ENCODE measurements at regions of chrX and their contacts with region 1.

Region 1: DNA sequence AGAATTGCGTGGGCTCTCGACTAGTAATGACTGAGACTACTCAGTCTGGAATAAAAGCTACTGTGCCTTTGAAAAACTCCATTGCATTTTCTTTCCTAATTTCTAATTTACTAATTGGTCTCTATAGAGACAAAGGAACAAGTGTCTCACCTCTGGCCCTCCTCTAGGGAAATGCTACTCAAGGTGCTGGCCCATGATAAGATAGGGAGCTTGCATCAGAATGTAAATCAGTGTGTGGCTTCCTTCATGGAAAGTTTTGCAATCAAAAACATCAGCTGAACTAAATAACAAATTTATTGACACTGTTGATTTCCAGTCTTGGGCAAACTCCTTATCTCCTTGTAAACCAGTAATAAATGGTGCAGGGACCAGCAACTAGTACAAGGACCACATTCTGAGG is 81.8 kb downstream of the SRPX start:
- DNase-seq: no peak
- H3K4me3 Mint-ChIP-seq: no peak overlapping the region
- H3K27ac Mint-ChIP-seq: no peak overlapping the region
- H3K4me1 Mint-ChIP-seq: no peaks in the 10 kb centered on the region
- H3K27me3 Mint-ChIP-seq: no peaks in the 10 kb centered on the region

Region 2: DNA sequence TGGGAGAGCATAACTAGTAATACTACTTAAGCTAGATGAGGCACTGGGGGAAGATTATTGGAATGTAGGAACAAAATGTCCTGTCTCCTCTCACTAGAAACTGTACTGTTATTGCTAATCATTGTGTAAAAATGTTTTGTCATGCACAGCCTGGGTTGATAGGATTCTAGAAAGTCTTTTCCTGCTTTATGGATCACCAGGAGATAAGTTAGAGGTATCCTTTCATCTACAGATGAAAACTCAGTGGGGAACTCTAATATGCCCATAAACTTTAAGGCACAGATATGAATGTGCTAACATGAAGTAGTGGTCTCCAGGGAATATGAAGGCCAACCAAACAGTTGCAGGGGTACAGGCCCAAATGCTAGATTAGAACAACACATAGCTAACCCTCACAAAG is 24.3 kb after region 1 on chrX:
- intact Hi-C with region 1: loop called (anchors 2 kb)
- DNase-seq: no peak
- H3K4me3 Mint-ChIP-seq: no peak overlapping the region
- H3K27ac Mint-ChIP-seq: no peak overlapping the region
- H3K4me1 Mint-ChIP-seq: no peaks in the 10 kb centered on the region
- H3K27me3 Mint-ChIP-seq: peaks cover 8% of the 10 kb centered on the region

Region 3: DNA sequence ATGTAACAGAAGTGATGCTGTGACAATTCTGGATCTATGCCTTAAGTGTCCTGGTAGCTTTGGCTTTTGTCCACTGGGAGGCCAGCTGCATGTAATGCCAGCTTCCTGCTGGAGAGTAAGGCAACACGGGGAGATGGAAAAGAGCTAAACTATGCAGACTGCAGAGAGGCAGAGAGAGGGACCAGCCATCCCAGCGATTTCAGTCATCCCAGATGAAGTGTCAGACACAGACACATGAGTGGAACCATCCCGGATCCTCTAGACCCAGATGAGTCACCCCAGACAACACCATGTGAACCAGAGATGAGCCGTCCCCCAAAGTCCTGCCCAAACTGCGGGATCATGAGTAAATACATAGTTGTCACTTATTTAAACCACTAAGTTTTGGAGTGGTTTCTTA is 67.1 kb after region 1 on chrX:
- intact Hi-C with region 1: no loop called
- DNase-seq: no peak
- H3K4me3 Mint-ChIP-seq: no peak overlapping the region
- H3K27ac Mint-ChIP-seq: no peak overlapping the region
- H3K4me1 Mint-ChIP-seq: no peaks in the 10 kb centered on the region
- H3K27me3 Mint-ChIP-seq: peaks cover 3% of the 10 kb centered on the region